Left cardiac atrium (tissue), 4 donors: ENCODE measurements at regions of chr9 and their contacts with region 1.

Region 1: GRCh38 chr9:120348951-120349429 is 231.0 kb downstream of the CDK5RAP2 start:
- DNase-seq: peak; percentile 30
- ATAC-seq: peak; percentile 67 to 75

Region 2: DNA sequence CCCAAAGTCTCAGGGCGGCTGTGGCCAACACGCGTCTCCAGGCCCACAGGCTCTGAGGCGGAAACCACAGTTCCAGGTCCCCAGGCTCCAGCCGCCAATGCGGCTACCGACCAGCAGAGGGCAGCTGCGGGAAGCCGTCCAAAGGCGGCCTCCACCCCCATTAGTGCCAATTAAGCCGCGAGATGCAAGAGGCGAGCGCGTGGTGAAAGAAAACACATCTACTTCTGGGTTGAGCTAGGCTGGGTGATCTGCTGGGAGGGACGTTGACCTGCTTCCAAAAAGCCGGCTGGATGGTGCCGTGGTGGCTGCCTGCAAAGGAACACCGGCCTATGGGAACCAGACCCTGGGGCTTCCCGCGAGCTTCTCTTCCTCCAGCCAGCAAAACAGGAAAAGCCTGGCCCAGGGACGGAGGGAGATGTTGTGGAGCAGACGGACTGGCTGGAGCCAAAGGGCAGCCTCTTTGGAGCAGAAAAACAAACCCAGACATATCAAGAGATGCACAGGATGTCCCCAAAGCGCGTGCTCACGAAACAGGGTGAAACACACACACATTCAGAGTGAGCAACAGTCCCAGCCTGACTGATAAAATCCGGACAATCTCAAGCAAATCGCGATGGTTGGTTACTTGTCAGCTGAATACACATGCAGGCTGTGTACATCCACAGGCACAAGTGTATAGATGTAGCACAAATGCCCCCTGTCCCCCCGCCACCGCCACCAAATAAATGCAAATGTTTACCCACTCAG is 792.7 kb before region 1 on chr9:
- intact Hi-C with region 1: loop called (anchors 2 to 10 kb)
- DNase-seq: peak; percentile 84
- ATAC-seq: peak; percentile 89 to 93

Region 3: GRCh38 chr9:120152295-120152694 is 196.7 kb before region 1 on chr9:
- intact Hi-C with region 1: no loop called
- DNase-seq: peak; percentile 26
- ATAC-seq: peak; percentile 34 to 58

Region 4: DNA sequence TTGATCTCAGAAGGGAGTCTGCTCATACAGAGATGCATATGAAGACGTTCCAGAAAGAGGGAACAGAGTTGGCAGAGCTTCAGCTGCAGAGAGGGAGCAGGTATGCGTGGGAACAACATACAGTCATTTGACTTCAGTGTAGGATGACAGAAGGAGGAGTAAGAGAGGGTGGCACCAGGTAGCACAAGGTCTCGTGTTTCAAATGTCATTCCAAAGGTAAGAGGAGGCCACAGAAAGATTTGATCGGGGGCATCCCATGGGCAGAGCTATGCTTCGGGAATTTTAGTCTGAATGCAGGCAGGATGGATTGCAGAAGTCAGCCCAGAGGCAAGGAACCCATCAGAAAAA is 136.2 kb before region 1 on chr9:
- intact Hi-C with region 1: no loop called
- DNase-seq: no peak
- ATAC-seq: no peak